ENCODE measurements at regions of chr11 and their contacts with region 1.

Region 1: DNA sequence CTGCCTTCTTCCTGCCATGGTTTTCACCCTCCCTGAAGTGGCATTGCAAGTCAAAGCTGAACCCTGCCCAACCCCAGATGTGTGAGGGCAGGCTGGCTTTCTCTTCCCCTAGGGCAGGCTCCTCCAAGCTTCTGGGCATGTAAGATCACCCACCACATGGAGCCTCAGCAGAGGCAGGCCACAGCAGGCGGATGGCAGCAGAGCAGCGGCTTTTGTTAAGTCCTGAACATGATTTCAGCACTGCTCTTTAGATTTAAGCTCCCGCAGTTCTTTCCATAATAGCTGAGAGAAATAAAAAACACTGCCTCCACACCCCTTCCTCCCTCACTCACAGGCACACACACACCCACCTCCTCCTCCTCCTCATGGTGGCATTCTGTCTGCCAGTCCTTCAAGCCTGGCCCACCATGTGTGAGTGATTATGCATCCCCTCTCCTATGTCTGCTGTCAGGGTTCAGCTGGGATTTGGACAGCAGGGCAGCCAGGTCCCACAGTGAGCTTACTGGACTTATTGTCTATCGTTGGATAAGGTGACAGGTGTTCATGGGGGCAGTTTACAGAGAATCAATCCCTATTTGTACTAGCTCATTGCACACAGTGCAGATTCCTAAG is 5.0 kb upstream of the NTM start:
- DNase-seq: no peak
- ATAC-seq: no peak
- H3K4me3 ChIP-seq: no peak overlapping the region
- H3K27ac ChIP-seq: no peak overlapping the region
- H3K4me1 ChIP-seq: no peaks in the 10 kb centered on the region
- H3K27me3 ChIP-seq: no peaks in the 10 kb centered on the region
- CTCF ChIP-seq: no peak
- POLR2A ChIP-seq: no peak
- RAD21 ChIP-seq: no peak

Region 2: DNA sequence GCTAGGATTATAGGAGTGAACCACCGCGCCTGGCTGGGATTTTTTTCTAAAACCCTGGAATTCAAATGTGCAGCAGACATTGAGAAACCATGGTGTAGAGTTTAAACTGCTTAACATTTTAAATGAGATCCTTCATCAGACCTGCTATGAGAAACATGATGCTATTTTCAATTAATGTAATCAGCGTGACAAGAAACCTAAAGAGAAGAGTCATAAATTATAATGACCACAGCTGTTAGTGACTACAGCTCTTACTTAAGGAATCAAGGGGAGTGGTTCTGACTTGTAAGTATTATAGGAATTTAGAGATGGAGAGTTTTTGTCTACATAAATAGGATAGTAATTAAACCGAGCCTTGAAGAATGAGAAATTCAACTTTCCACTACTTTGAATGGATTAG is 1819.2 kb before region 1 on chr11:
- CTCF ChIA-PET with region 1: no interaction called
- POLR2A ChIA-PET with region 1: no interaction called
- dilution Hi-C with region 1: no loop called
- in situ Hi-C with region 1: no loop called
- intact Hi-C with region 1: no loop called
- DNase-seq: no peak
- ATAC-seq: no peak
- H3K4me3 ChIP-seq: no peak overlapping the region
- H3K27ac ChIP-seq: no peak overlapping the region
- H3K4me1 ChIP-seq: no peaks in the 10 kb centered on the region
- H3K27me3 ChIP-seq: no peaks in the 10 kb centered on the region
- CTCF ChIP-seq: no peak
- POLR2A ChIP-seq: no peak
- RAD21 ChIP-seq: no peak

Region 3: DNA sequence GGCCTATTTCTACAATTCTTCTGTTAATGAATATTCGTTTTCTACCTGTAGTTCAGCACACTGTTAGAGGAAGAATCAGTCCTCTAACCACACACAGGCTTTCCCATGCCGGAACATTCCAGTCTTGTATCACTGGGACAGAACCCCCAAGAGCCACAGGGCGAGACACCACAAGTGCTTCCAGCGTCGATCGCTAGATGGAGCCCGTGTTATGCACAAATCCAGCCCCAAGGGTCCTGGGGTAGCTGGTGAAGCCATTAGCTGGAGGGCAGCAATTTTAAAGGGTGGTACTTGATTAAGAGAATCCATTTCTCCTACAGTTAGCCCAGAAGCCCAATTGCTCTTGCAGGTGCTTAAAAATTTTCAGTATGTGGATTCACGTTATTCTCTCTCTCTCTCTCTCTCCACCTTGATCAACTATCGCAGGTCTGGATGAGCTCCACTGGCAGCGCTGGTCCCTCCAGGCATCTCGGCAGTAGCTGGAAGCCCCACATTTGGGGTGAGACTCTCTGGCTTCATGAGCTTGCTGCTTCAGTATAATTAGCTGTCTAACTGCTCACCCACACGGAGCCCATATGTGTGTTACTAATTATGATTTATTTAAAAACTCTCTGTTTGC is 300.9 kb before region 1 on chr11:
- CTCF ChIA-PET with region 1: no interaction called
- POLR2A ChIA-PET with region 1: no interaction called
- dilution Hi-C with region 1: no loop called
- in situ Hi-C with region 1: no loop called
- intact Hi-C with region 1: no loop called
- DNase-seq: peak; percentile 70
- ATAC-seq: peak; percentile 99
- H3K4me3 ChIP-seq: no peak overlapping the region
- H3K27ac ChIP-seq: no peak overlapping the region
- H3K4me1 ChIP-seq: no peaks in the 10 kb centered on the region
- H3K27me3 ChIP-seq: peaks cover 2% of the 10 kb centered on the region
- CTCF ChIP-seq: peak; percentile 89
- POLR2A ChIP-seq: no peak
- RAD21 ChIP-seq: peak; percentile 96

Region 4: GRCh38 chr11:131658952-131659351 is 293.5 kb after region 1 on chr11:
- CTCF ChIA-PET with region 1: no interaction called
- POLR2A ChIA-PET with region 1: no interaction called
- dilution Hi-C with region 1: no loop called
- in situ Hi-C with region 1: no loop called
- intact Hi-C with region 1: no loop called
- DNase-seq: no peak
- ATAC-seq: no peak
- H3K4me3 ChIP-seq: no peak overlapping the region
- H3K27ac ChIP-seq: no peak overlapping the region
- H3K4me1 ChIP-seq: no peaks in the 10 kb centered on the region
- H3K27me3 ChIP-seq: peaks cover 17% of the 10 kb centered on the region
- CTCF ChIP-seq: no peak
- POLR2A ChIP-seq: no peak
- RAD21 ChIP-seq: no peak

Region 5: DNA sequence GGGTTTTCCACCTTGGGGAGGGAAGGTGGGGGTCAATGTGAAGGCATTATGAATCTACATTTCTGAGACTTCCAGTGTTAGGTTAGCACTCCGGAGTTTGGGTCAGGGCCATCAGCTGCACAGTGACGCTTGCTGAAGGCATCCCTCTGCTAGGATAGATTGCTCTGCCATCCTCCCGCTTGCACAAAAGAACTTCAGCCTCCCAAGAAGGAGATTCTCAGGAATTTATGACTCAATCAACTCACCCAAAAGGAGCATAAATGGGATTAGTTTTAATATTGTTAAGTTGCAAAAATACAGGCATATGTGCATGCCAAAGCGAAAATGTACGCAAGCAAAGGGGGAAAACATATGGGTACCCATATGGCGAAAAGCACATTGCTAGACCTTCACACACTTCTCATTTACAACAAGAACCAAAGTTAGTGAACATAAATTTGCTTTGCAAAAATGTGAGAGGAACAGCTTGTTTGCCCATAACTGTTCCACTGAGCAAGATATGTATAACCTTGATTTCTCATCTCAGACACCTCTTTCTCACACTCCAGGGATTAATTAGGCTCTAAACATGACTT is 1153.9 kb after region 1 on chr11:
- CTCF ChIA-PET with region 1: no interaction called
- POLR2A ChIA-PET with region 1: no interaction called
- dilution Hi-C with region 1: no loop called
- in situ Hi-C with region 1: no loop called
- intact Hi-C with region 1: loop called (anchors 5 kb)
- DNase-seq: peak; percentile 4
- ATAC-seq: no peak
- H3K4me3 ChIP-seq: no peak overlapping the region
- H3K27ac ChIP-seq: no peak overlapping the region
- H3K4me1 ChIP-seq: no peaks in the 10 kb centered on the region
- H3K27me3 ChIP-seq: no peaks in the 10 kb centered on the region
- CTCF ChIP-seq: no peak
- POLR2A ChIP-seq: no peak
- RAD21 ChIP-seq: no peak

Measured in IMR-90 (cell line).